K562 (cell line): ENCODE measurements at regions of chr10 and their contacts with region 1.

Region 1: DNA sequence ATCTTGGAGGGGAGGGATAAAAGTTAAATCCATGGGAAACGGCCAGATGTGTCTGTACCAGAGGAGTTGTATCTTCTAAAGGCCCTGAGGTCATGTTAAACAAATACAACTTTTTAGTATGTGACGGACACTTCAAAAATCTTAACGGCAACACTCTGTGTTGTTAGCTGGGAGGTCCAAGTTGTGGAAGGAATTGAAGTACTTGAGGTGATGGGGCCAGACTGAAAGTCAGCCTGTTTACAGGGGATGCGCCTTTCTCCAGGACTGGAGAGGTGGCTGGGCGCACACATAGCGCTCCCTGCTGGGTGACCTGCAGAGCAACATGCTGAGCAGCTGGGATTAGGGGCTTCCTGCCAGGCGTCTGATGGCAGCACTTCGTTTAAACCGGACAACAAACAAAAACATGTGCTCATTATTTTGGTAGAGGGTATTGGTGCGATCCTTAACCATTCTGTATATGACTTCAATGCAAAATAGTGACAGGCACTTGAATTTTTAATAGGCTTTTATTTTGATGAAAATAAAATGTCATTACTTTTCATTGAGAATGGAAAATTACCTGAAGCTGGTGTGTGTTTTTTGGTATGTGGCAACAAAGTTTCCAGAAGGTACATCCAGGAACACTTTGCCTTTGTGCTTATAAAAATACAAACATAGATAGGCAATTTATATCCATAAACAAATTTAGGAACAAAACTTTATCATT is 198.2 kb downstream of the MLLT10 start:
- DNase-seq: peak; percentile 56 to 74 (median 68)
- ATAC-seq: peak; percentile 99
- H3K4me3 ChIP-seq: no peak overlapping the region
- H3K27ac ChIP-seq: no peak overlapping the region
- H3K4me1 ChIP-seq: no peaks in the 10 kb centered on the region; a peak in 1 of 5 replicates
- H3K27me3 ChIP-seq: no peaks in the 10 kb centered on the region
- CTCF ChIP-seq: peak; percentile 80 to 92 (median 83)
- EP300 ChIP-seq: no peak
- POLR2A ChIP-seq: no peak
- RAD21 ChIP-seq: peak; percentile 73 to 92

Region 2: GRCh38 chr10:21509341-21510240 is 222.6 kb before region 1 on chr10:
- CTCF ChIA-PET with region 1: no interaction called
- POLR2A ChIA-PET with region 1: no interaction called
- in situ Hi-C with region 1: loop called (anchors 5 kb)
- intact Hi-C with region 1: no loop called
- DNase-seq: no peak
- ATAC-seq: no peak
- H3K4me3 ChIP-seq: no peak overlapping the region
- H3K27ac ChIP-seq: no peak overlapping the region
- H3K4me1 ChIP-seq: peaks cover 4 to 7% of the 10 kb centered on the region in 2 experiments; a peak in 3 of 5 replicates
- H3K27me3 ChIP-seq: no peaks in the 10 kb centered on the region
- CTCF ChIP-seq: no peak
- EP300 ChIP-seq: no peak
- POLR2A ChIP-seq: no peak
- RAD21 ChIP-seq: no peak

Region 3: GRCh38 chr10:21614000-21614399 is 118.2 kb before region 1 on chr10:
- CTCF ChIA-PET with region 1: no interaction called
- POLR2A ChIA-PET with region 1: no interaction called
- in situ Hi-C with region 1: no loop called
- intact Hi-C with region 1: no loop called
- DNase-seq: no peak
- ATAC-seq: no peak
- H3K4me3 ChIP-seq: no peak overlapping the region
- H3K27ac ChIP-seq: no peak overlapping the region
- H3K4me1 ChIP-seq: no peaks in the 10 kb centered on the region
- H3K27me3 ChIP-seq: no peaks in the 10 kb centered on the region
- CTCF ChIP-seq: no peak
- EP300 ChIP-seq: no peak
- POLR2A ChIP-seq: no peak
- RAD21 ChIP-seq: no peak